CD8-positive, alpha-beta memory T cell (primary cell): ENCODE measurements at regions of chr1 and their contacts with region 1.

Region 1: GRCh38 chr1:117758444-117759316 is 152.8 kb downstream of the TENT5C start:
- DNase-seq: peak; percentile 51 to 77 (median 56)
- H3K4me3 ChIP-seq: peak overlapping the region; percentile 66
- H3K4me3 Mint-ChIP-seq: peak overlapping the region; percentile 58 to 88 (median 83)
- H3K27ac ChIP-seq: no peak overlapping the region
- H3K27ac Mint-ChIP-seq: peak overlapping the region in 4 of 8 donors; percentile 5 to 79 (median 38)
- H3K4me1 ChIP-seq: peaks cover 4% of the 10 kb centered on the region
- H3K4me1 Mint-ChIP-seq: peaks cover 7 to 14% (median 9%) of the 10 kb centered on the region in 3 donors
- H3K27me3 ChIP-seq: peaks cover 12% of the 10 kb centered on the region
- H3K27me3 Mint-ChIP-seq: peaks cover 11 to 17% of the 10 kb centered on the region in 2 donors

Region 2: DNA sequence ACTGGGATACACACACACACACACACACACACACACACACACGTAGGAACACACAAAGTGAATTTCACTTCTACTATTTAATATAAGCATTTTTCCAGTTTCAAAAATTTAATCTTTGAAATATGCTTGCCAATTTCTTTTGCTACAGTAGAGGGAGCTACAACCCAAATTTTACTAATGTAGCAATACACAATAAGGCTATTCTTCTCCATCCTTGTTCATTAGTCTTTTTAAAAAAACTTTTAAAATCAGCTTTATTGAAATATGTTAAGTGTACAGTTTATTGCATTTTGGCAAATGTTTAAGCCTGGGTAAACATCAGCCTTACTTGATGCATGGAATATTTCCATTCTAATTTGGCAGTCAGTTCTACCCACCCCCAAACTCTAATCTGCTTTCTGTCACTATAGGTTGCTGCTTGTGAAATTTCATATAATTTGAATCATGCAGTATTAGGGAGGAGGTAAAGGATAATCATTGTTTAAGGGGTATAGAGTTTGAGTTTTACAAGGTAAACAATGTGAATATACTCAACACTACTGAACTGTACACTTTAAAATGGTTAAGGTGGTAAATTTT is 245.8 kb before region 1 on chr1:
- CTCF ChIA-PET with region 1: interaction called, 35 read pairs
- POLR2A ChIA-PET with region 1: no interaction called
- DNase-seq: peak in 2 of 5 donors; percentile 10 to 13
- H3K4me3 ChIP-seq: no peak overlapping the region
- H3K4me3 Mint-ChIP-seq: no peak overlapping the region
- H3K27ac ChIP-seq: no peak overlapping the region
- H3K27ac Mint-ChIP-seq: no peak overlapping the region
- H3K4me1 ChIP-seq: no peaks in the 10 kb centered on the region
- H3K4me1 Mint-ChIP-seq: no peaks in the 10 kb centered on the region
- H3K27me3 ChIP-seq: no peaks in the 10 kb centered on the region
- H3K27me3 Mint-ChIP-seq: no peaks in the 10 kb centered on the region

Region 3: DNA sequence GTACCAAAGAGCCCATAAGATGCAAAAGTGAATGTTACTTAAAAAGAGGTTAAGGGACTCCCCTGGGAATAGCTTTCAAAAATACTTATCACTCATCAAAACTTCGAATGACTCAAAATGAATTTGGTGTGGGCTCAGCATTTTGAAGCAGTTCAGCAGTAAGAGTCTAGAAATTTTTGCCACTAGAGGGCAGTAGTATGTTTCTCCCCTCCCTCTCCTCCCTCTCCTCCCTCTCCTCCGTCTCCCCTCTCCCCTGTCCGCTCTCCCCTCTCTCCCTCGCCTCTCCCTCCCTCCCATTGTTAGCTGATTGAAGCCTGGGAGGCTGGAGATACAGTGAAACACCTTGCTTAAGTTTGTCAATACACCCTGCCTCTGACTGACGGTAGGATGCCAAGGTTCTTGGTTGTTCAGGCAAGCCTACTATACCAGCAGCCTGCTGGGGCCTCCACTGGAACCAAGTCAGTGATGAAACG is 223.6 kb before region 1 on chr1:
- CTCF ChIA-PET with region 1: interaction called, 187 read pairs
- POLR2A ChIA-PET with region 1: no interaction called
- DNase-seq: peak in 4 of 5 donors; percentile 5 to 61 (median 54)
- H3K4me3 ChIP-seq: no peak overlapping the region
- H3K4me3 Mint-ChIP-seq: no peak overlapping the region
- H3K27ac ChIP-seq: no peak overlapping the region
- H3K27ac Mint-ChIP-seq: peak overlapping the region in 2 of 8 donors; percentile 9 to 26
- H3K4me1 ChIP-seq: peaks cover 20% of the 10 kb centered on the region
- H3K4me1 Mint-ChIP-seq: peaks cover 0 to 4% (median 0%) of the 10 kb centered on the region in 3 donors
- H3K27me3 ChIP-seq: no peaks in the 10 kb centered on the region
- H3K27me3 Mint-ChIP-seq: no peaks in the 10 kb centered on the region

Region 4: DNA sequence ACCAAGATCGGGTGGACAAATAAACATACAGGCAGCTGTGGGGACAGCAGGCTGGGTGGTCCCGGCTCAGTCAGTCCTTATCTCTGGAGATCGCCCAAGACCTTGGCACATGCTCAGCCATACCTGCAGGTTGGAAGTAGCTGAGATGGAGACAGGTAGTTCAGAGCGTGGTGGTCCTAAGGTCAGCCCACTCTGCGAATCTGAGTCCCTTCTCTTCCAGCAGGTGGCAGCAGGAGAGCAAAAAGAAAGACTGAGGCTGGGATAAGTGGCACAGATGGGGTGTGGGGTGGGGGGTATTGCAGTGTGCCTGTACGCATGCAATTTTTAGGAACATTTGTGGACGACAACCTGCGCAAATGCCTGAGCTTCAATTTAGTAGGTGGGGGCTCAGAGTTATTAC is 48.0 kb before region 1 on chr1:
- CTCF ChIA-PET with region 1: interaction called, 15 read pairs
- POLR2A ChIA-PET with region 1: no interaction called
- DNase-seq: no peak
- H3K4me3 ChIP-seq: no peak overlapping the region
- H3K4me3 Mint-ChIP-seq: no peak overlapping the region
- H3K27ac ChIP-seq: no peak overlapping the region
- H3K27ac Mint-ChIP-seq: peak overlapping the region in 1 of 8 donors; percentile 53
- H3K4me1 ChIP-seq: no peaks in the 10 kb centered on the region
- H3K4me1 Mint-ChIP-seq: no peaks in the 10 kb centered on the region
- H3K27me3 ChIP-seq: no peaks in the 10 kb centered on the region
- H3K27me3 Mint-ChIP-seq: peaks cover 4 to 47% of the 10 kb centered on the region in 2 donors

Region 5: DNA sequence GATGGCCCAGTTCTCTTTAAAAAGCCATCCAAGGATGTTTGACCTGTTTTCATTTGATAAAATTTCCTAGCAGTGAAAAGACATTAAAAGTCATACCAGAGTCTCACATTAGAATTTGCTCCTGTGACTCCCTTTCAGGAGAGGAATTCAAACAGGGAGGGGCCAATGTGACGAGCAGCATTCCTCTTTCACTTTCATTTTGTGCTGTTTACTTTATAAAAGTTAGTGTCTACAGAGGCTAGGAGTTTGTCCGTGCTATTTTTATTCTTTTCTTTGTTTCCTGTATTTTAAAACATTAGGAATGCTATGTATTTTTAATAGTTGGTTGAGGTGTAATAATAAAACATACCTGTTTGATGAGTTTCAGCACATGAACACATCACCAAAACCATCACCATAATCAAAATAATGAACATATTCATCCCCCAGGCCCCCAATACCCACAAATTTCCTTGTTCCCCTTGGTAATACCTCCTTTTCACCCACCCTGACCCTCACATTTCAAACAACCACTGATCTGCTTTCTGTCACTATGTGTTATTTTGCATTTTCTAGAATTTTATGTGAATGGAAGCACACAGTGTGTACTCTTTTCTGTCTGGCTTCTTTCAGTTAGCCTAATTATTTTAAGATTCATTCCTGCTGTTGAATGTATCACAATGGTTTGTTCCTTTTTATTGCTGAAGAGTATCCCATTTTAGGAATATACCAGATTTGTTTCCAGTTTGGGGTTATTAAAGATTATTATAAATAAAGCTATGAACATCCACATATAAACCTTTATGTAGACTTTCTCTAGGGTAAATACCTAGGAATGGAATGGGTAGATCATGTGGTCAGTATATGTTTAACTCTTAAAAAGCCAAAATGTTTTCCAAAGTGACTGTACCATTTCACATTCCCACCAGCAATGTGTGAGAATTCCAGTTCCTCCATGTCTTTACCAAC is 23.4 kb before region 1 on chr1:
- CTCF ChIA-PET with region 1: interaction called, 13 read pairs
- POLR2A ChIA-PET with region 1: no interaction called
- DNase-seq: peak in 4 of 5 donors; percentile 16 to 58 (median 36)
- H3K4me3 ChIP-seq: peak overlapping the region; percentile 55
- H3K4me3 Mint-ChIP-seq: peak overlapping the region; percentile 68 to 93 (median 82)
- H3K27ac ChIP-seq: peak overlapping the region; percentile 26
- H3K27ac Mint-ChIP-seq: peak overlapping the region; percentile 85 to 98 (median 94)
- H3K4me1 ChIP-seq: peaks cover 10% of the 10 kb centered on the region
- H3K4me1 Mint-ChIP-seq: peaks cover 15 to 23% (median 21%) of the 10 kb centered on the region in 3 donors
- H3K27me3 ChIP-seq: no peaks in the 10 kb centered on the region
- H3K27me3 Mint-ChIP-seq: no peaks in the 10 kb centered on the region

Region 6: DNA sequence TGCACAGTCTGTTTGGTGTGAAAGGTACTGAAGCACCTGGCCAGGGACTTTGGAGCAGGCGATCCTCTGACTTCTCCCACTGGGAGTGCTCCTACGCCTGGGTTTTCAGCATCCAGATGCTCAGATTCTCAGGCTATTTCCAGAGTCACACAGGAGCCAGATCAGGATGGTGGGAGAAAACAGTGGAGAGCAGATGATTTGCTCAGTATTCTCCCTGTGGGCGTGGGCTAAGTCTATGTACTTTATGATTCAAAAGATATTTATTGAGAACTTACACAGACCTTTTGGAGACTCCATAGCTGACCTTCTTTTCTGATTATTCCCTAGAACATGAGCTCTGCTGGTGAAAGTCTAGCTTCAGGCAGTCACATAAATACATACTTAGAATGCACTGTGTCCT is 18.2 kb before region 1 on chr1:
- CTCF ChIA-PET with region 1: interaction called, 13 read pairs
- POLR2A ChIA-PET with region 1: no interaction called
- DNase-seq: no peak
- H3K4me3 ChIP-seq: no peak overlapping the region
- H3K4me3 Mint-ChIP-seq: no peak overlapping the region
- H3K27ac ChIP-seq: no peak overlapping the region
- H3K27ac Mint-ChIP-seq: peak overlapping the region in 1 of 8 donors; percentile 77
- H3K4me1 ChIP-seq: peaks cover 1% of the 10 kb centered on the region
- H3K4me1 Mint-ChIP-seq: peaks cover 7% of the 10 kb centered on the region in 3 donors
- H3K27me3 ChIP-seq: no peaks in the 10 kb centered on the region
- H3K27me3 Mint-ChIP-seq: peaks cover 5 to 6% of the 10 kb centered on the region in 2 donors